ENCODE measurements at regions of chr19 and their contacts with region 1.

Region 1: GRCh38 chr19:18408053-18408476 is 10.6 kb upstream of the LRRC25 start:
- DNase-seq: peak in 1 of 2 experiments; percentile 75
- H3K4me3 ChIP-seq: no peak overlapping the region
- H3K4me1 ChIP-seq: no peaks in the 10 kb centered on the region
- H3K27me3 ChIP-seq: no peaks in the 10 kb centered on the region

Region 2: GRCh38 chr19:18349524-18350128 is 58.4 kb before region 1 on chr19:
- in situ Hi-C with region 1: loop called (anchors 5 kb)
- DNase-seq: peak; percentile 31 to 75
- H3K4me3 ChIP-seq: no peak overlapping the region
- H3K4me1 ChIP-seq: no peaks in the 10 kb centered on the region
- H3K27me3 ChIP-seq: no peaks in the 10 kb centered on the region; the same call in 1 of the 2 replicates

Region 3: GRCh38 chr19:18469069-18469846 is 61.2 kb after region 1 on chr19:
- in situ Hi-C with region 1: no loop called
- DNase-seq: peak; percentile 50 to 84
- H3K4me3 ChIP-seq: no peak overlapping the region
- H3K4me1 ChIP-seq: no peaks in the 10 kb centered on the region
- H3K27me3 ChIP-seq: no peaks in the 10 kb centered on the region

Region 4: DNA sequence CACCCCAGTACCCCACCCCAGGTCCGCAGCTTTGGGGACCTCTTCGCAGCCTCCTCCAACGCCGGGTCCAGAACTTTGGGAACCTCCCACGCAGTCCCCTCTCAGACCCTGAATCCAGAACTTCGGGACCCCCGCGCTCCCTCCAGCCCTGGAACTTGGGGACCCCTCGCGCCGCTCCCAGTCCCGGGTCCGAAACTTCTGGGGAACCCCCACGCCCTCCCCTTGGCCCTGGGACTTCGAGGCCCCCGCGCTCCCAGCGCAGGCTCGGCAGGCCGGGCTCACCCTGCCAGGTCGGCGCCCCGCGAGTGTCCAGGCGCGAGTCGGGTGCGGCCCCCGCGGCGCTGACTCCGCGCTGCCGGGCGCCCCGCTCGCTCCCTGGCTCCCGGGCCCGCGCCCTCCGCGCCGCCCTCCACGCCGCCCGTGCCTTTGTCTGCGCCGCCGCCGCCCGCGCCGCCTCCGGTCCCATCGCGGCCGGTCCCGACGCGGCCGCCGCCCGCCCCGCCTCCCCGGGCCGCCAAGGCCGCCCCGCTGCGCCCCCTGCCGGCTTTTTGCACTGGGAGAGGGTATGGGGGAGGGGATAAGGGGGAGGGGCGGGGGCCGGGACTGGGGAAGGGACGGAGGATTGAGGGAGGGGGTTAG is 532.8 kb after region 1 on chr19 and contains the start of gene HOMER3:
- in situ Hi-C with region 1: no loop called
- DNase-seq: peak; percentile 43 to 89
- H3K4me3 ChIP-seq: peak within 1 kb of the TSS; percentile 63
- H3K4me1 ChIP-seq: peaks cover 3% of the 10 kb centered on the region; the same call in 1 of the 2 replicates
- H3K27me3 ChIP-seq: no peaks in the 10 kb centered on the region